PC-3 (cell line): ENCODE measurements at regions of chr17 and their contacts with region 1.

Region 1: GRCh38 chr17:50478391-50479381 is at the start of gene RSAD1:
- DNase-seq: peak; percentile 96
- ATAC-seq: peak; percentile 85
- H3K4me3 ChIP-seq: peak within 1 kb of the TSS; percentile 76
- H3K27ac ChIP-seq: peak within 1 kb of the TSS; percentile 38
- H3K4me1 ChIP-seq: peaks cover 24% of the 10 kb centered on the region
- H3K27me3 ChIP-seq: no peaks in the 10 kb centered on the region
- CTCF ChIP-seq: peak; percentile 90
- total RNA-seq, gene RSAD1: 37.7 and 46.7 TPM in 2 replicates

Region 2: GRCh38 chr17:50055426-50056230 is 423.1 kb before region 1 on chr17 and contains the start of gene ITGA3:
- CTCF ChIA-PET with region 1: interaction called, 10 read pairs
- POLR2A ChIA-PET with region 1: no interaction called
- intact Hi-C with region 1: no loop called
- DNase-seq: peak; percentile 98
- ATAC-seq: peak; percentile 36
- H3K4me3 ChIP-seq: peak within 1 kb of the TSS; percentile 90
- H3K27ac ChIP-seq: peak within 1 kb of the TSS; percentile 96
- H3K4me1 ChIP-seq: peaks cover 79% of the 10 kb centered on the region
- H3K27me3 ChIP-seq: no peaks in the 10 kb centered on the region
- CTCF ChIP-seq: no peak
- total RNA-seq, gene ITGA3: 598 and 763 TPM in 2 replicates

Region 3: DNA sequence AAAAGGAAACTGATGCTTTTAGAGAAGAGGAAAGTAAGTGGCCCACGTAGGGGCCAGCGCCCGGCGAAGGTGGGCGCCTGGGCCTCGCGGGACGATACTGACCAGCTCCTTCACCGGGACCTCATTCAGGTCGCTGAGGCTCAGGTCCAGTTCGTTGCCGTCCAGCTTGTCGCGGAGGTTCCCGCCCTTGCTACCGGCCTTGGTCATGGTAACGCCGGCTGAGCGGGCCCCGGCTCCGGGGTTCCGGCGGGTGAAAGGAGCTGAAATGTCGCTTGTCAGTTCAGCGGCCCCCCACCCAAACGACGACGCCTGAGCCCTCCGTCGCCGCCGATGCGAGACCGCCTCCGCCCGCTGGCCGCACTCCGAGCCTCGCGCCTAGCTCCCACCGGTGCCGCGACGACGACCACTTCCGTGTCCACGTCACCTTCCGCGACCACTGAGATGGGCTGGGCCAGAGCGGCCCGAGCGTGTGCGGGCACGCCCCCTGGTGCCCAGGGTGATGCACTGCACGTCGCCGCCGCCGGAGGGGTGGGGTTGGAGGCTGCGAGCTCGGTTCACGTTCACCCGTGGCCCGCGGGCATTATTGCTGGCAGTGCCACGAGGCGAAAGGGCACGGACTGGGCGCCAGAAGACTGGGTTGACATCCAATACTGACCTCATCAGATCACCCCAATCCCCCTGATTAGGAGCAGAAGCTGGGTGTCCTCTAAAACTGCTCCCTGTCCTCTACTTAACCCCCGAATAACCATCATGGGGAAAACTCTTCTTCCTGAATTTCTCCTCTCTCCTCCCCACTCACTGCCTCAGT is 81.4 kb before region 1 on chr17 and contains the start of gene LRRC59:
- CTCF ChIA-PET with region 1: interaction called, 13 read pairs
- POLR2A ChIA-PET with region 1: interaction called, 6 read pairs
- intact Hi-C with region 1: loop called (anchors 1 kb)
- DNase-seq: peak; percentile 90
- ATAC-seq: peak; percentile 76
- H3K4me3 ChIP-seq: peak within 1 kb of the TSS; percentile 73
- H3K27ac ChIP-seq: peak within 1 kb of the TSS; percentile 84
- H3K4me1 ChIP-seq: peaks cover 37% of the 10 kb centered on the region
- H3K27me3 ChIP-seq: no peaks in the 10 kb centered on the region
- CTCF ChIP-seq: peak; percentile 95
- total RNA-seq, gene LRRC59: 324 and 427 TPM in 2 replicates

Region 4: GRCh38 chr17:50533720-50534148 is 55.0 kb after region 1 on chr17:
- CTCF ChIA-PET with region 1: no interaction called
- POLR2A ChIA-PET with region 1: no interaction called
- intact Hi-C with region 1: loop called (anchors 2 kb)
- DNase-seq: peak; percentile 63
- ATAC-seq: peak; percentile 64
- H3K4me3 ChIP-seq: peak overlapping the region; percentile 78
- H3K27ac ChIP-seq: peak overlapping the region; percentile 76
- H3K4me1 ChIP-seq: peaks cover 33% of the 10 kb centered on the region
- H3K27me3 ChIP-seq: no peaks in the 10 kb centered on the region
- CTCF ChIP-seq: no peak

Region 5: GRCh38 chr17:50626037-50626574 is 147.4 kb after region 1 on chr17:
- CTCF ChIA-PET with region 1: no interaction called
- POLR2A ChIA-PET with region 1: no interaction called
- intact Hi-C with region 1: loop called (anchors 1 kb)
- DNase-seq: peak; percentile 76
- ATAC-seq: peak; percentile 61
- H3K4me3 ChIP-seq: no peak overlapping the region
- H3K27ac ChIP-seq: no peak overlapping the region
- H3K4me1 ChIP-seq: peaks cover 23% of the 10 kb centered on the region
- H3K27me3 ChIP-seq: no peaks in the 10 kb centered on the region
- CTCF ChIP-seq: peak; percentile 92